Motor neuron (in vitro differentiated cells): ENCODE measurements at regions of chr5 and their contacts with region 1.

Region 1: GRCh38 chr5:168268949-168269943 is 22.2 kb upstream of the WWC1 start:
- ATAC-seq: peak; percentile 82 to 98 (median 96)
- H3K4me3 ChIP-seq: peak overlapping the region; percentile 16 to 28 (median 18)
- H3K27ac ChIP-seq: no peak overlapping the region
- H3K4me1 ChIP-seq: peaks cover 6 to 9% of the 10 kb centered on the region in 2 donors

Region 2: GRCh38 chr5:167177736-167178135 is 1091.5 kb before region 1 on chr5:
- in situ Hi-C with region 1: no loop called
- ATAC-seq: peak in 2 of 8 experiments; percentile 29 to 46
- H3K4me3 ChIP-seq: no peak overlapping the region
- H3K27ac ChIP-seq: no peak overlapping the region
- H3K4me1 ChIP-seq: peaks cover 0 to 10% of the 10 kb centered on the region in 2 donors

Region 3: DNA sequence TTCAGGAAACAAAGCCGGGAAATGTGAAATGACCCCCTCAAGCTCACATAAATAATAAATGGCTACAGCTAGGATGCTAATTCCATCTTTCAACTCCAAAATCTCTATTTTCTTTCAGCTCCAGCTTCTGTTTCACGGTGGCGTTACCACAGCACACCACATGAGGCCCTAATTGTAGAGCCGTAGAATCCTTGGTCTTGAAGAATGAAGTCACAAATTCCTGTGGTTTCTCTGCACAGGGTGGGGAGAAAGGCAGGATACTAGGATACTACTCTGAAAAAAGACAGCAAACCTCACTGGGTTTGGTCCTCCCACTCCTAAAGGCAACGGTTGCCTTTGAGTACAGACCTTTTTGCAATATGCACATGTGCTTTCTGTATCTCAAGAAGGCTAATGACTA is 203.1 kb after region 1 on chr5:
- in situ Hi-C with region 1: loop called in 1 of 9 experiments (anchors 25 kb)
- ATAC-seq: peak in 5 of 8 experiments; percentile 49 to 97 (median 92)
- H3K4me3 ChIP-seq: no peak overlapping the region
- H3K27ac ChIP-seq: no peak overlapping the region
- H3K4me1 ChIP-seq: peaks cover 4 to 10% of the 10 kb centered on the region in 2 donors

Region 4: GRCh38 chr5:168654211-168654721 is 385.0 kb after region 1 on chr5:
- in situ Hi-C with region 1: loop called in 1 of 9 experiments (anchors 25 kb)
- ATAC-seq: peak in 3 of 8 experiments; percentile 12 to 37 (median 16)
- H3K4me3 ChIP-seq: no peak overlapping the region
- H3K27ac ChIP-seq: no peak overlapping the region
- H3K4me1 ChIP-seq: no peaks in the 10 kb centered on the region